Dorsolateral prefrontal cortex (tissue), 120 donors: ENCODE measurements at regions of chr6 and their contacts with region 1.

Region 1: DNA sequence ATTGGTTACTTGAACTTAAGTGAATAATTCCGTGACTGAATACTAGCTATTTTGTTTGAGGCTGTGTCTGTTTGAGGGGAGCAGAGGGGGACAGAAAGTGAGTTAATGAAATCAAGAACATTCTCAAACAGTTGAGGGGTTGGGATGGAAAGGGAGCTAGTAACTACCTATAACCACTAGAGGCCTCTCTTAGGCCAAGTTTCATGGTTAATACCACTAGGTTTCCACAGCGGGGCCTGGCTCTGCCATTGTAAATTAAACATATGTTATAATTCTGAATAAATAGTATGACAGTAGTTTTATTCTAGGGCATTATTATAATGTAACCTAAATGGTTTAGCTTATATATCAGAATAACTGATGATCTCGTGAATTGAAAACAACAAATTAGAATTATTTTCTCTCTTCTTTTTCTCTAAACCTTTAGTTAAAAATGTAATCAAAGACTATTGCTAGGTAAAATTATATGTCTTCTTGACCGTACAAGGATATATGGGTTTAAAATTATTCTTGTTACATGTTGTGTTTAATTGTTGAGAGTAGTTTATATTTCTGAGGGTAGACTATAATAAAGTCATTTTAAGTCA is 108.1 kb downstream of the BCKDHB start:
- DNase-seq: peak in 5 of 10 donors; percentile 20 to 52 (median 43)
- H3K4me3 ChIP-seq: no peak overlapping the region
- H3K27ac ChIP-seq: no peak overlapping the region
- H3K27me3 ChIP-seq: no peaks in the 10 kb centered on the region
- CTCF ChIP-seq: peak; percentile 26 to 82 (median 72)

Region 2: DNA sequence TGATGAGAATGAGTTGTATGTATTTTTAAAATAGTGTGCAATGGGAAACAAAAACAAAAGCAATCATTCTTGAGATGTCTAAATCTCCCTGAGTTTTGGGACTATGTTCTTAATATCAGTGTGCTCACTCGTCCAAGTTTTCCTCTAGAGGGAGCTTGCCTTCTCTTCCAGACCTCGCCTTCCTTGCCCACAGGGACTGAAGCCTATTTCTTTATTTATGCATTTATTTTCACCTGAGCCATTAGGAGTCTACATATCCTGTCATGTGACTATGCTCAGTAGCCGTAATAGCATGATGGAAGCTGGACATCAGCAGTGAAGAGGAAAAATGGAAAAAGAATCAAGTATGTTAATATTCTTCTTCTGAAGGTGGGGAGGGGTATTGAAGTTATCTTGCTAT is 452.2 kb before region 1 on chr6:
- intact Hi-C with region 1: no loop called
- DNase-seq: no peak
- H3K4me3 ChIP-seq: no peak overlapping the region
- H3K27ac ChIP-seq: no peak overlapping the region
- H3K27me3 ChIP-seq: peaks cover 0 to 1% (median 0%) of the 10 kb centered on the region in 45 donors
- CTCF ChIP-seq: peak in 1 of 56 donors; percentile 12

Region 3: GRCh38 chr6:80280262-80281010 is 65.9 kb after region 1 on chr6:
- intact Hi-C with region 1: no loop called
- DNase-seq: no peak
- H3K4me3 ChIP-seq: no peak overlapping the region
- H3K27ac ChIP-seq: no peak overlapping the region
- H3K27me3 ChIP-seq: no peaks in the 10 kb centered on the region
- CTCF ChIP-seq: no peak

Region 4: GRCh38 chr6:80338201-80338836 is 123.8 kb after region 1 on chr6:
- intact Hi-C with region 1: loop called in 1 of 2 experiments (anchors 10 kb)
- DNase-seq: peak in 7 of 10 donors; percentile 10 to 57 (median 48)
- H3K4me3 ChIP-seq: no peak overlapping the region
- H3K27ac ChIP-seq: no peak overlapping the region
- H3K27me3 ChIP-seq: no peaks in the 10 kb centered on the region
- CTCF ChIP-seq: peak; percentile 35 to 83 (median 62)

Region 5: DNA sequence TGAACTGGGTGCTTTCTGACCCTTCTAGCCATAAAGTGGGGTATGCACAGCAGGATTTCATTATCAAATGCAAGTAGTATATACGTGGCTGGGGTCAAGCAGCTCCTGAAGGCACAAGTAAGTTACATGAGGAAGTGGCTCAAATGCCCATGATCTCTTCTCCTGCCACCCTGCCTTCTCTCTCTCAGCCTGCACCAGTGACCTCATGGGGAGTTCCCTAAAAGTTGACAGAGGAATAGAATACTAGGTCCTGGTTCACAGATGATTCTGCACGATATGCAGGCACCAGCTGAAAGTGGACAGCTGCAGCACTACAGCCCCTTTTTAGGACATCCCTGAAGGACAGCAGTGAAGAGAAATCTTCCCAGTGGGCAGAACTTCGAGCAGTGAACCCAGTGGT is 174.0 kb after region 1 on chr6:
- intact Hi-C with region 1: no loop called
- DNase-seq: no peak
- H3K4me3 ChIP-seq: no peak overlapping the region
- H3K27ac ChIP-seq: no peak overlapping the region
- H3K27me3 ChIP-seq: no peaks in the 10 kb centered on the region
- CTCF ChIP-seq: no peak

Region 6: DNA sequence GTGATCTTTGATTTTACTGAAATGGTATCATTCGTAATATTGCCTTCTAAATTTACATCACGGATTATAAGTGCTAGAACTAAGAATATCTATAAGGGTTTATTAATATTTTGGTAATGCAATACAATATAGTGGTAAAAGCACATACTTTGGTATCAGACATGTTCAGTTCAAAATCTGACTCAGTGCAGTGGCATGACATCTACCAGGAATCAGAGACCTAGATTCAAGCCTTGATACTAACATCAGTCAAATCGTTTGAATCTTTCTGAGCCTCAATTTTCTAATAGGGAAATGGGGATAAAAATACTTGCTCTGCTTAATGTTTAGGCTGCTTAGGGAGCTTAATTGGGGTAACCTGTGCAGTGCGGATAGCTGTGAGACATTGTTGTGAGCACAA is 379.9 kb after region 1 on chr6:
- intact Hi-C with region 1: no loop called
- DNase-seq: no peak
- H3K4me3 ChIP-seq: no peak overlapping the region
- H3K27ac ChIP-seq: no peak overlapping the region
- H3K27me3 ChIP-seq: no peaks in the 10 kb centered on the region
- CTCF ChIP-seq: no peak